Activated CD4-positive, alpha-beta memory T cell treated with anti-CD3 and anti-CD28 coated beads for 36 hours (primary cell): ENCODE measurements at regions of chr6 and their contacts with region 1.

Region 1: GRCh38 chr6:133923938-133924593 is 29.0 kb upstream of the TBPL1 start:
- DNase-seq: peak; percentile 60
- H3K4me3 Mint-ChIP-seq: no peak overlapping the region
- H3K27ac Mint-ChIP-seq: no peak overlapping the region
- H3K4me1 Mint-ChIP-seq: no peaks in the 10 kb centered on the region
- H3K27me3 Mint-ChIP-seq: peaks cover 27% of the 10 kb centered on the region

Region 2: DNA sequence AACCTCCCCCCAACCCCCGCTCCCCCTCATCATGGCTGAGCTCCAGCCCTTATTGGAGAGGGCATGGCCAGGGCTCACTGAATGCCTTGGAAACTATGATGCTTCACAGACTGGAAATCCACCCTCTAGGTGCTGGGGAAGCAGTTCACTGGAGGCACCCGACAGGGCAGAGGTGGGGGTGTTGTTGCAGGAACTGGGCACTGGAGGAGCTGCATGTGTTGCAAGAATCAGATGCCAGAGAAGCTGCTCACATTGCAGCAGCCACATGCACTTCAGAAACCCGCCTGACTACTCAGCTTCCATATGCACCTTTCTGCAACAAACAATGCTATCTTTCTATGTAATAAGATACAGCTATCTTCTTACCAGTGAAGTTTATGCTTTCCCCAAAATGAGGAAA is 21.1 kb after region 1 on chr6:
- CTCF ChIA-PET with region 1: interaction called, 18 read pairs
- POLR2A ChIA-PET with region 1: no interaction called
- intact Hi-C with region 1: no loop called
- DNase-seq: no peak
- H3K4me3 Mint-ChIP-seq: no peak overlapping the region
- H3K27ac Mint-ChIP-seq: no peak overlapping the region
- H3K4me1 Mint-ChIP-seq: no peaks in the 10 kb centered on the region
- H3K27me3 Mint-ChIP-seq: peaks cover 5% of the 10 kb centered on the region

Region 3: GRCh38 chr6:133973109-133973971 is 49.3 kb after region 1 on chr6:
- CTCF ChIA-PET with region 1: interaction called, 43 read pairs
- POLR2A ChIA-PET with region 1: no interaction called
- intact Hi-C with region 1: loop called (anchors 1 kb)
- DNase-seq: no peak
- H3K4me3 Mint-ChIP-seq: no peak overlapping the region
- H3K27ac Mint-ChIP-seq: no peak overlapping the region
- H3K4me1 Mint-ChIP-seq: peaks cover 30% of the 10 kb centered on the region
- H3K27me3 Mint-ChIP-seq: no peaks in the 10 kb centered on the region

Region 4: DNA sequence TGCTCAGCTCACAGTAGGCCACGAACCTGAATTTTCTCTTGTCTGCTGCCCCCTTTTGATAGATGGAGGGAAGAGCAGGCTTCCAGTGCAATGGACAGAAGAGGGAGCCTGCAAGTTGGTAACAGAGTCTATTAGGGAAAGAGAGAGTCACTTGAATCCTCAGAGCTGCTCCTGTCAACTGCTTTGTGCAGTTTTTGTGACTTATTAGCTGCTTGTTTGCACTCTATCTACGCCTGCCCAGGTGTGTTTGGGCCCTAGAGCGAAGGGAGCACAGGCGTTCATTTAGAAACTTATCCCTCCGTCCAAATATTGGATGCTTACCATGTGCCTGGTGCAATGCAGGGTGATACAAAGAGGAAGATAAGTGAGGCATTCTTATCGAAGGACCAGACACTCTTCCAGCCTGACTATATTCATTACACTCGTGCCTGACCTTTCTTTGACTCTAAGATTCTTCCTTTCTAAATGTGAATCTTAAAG is 139.9 kb after region 1 on chr6:
- CTCF ChIA-PET with region 1: interaction called, 207 read pairs
- POLR2A ChIA-PET with region 1: no interaction called
- intact Hi-C with region 1: loop called (anchors 1 kb)
- DNase-seq: peak; percentile 67
- H3K4me3 Mint-ChIP-seq: no peak overlapping the region
- H3K27ac Mint-ChIP-seq: no peak overlapping the region
- H3K4me1 Mint-ChIP-seq: no peaks in the 10 kb centered on the region
- H3K27me3 Mint-ChIP-seq: no peaks in the 10 kb centered on the region

Region 5: DNA sequence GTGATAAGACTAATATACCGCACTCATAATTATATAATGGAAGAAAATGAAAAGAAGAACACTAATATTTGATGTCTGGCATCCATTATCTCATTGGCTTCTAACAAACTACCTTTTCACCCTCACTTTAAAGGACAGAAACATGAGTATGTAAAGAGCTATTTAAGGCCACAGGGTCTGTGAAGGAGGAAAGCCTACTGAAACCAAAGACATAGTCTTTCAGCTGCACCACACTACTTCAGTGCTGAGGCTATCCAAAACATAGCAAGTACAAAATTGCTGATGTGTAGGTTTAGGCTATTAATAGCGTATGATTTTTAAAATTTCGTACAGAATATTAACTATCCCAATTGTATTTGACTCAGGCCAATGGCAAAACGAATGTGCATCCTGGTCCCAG is 166.5 kb after region 1 on chr6:
- CTCF ChIA-PET with region 1: interaction called, 362 read pairs
- POLR2A ChIA-PET with region 1: no interaction called
- intact Hi-C with region 1: no loop called
- DNase-seq: no peak
- H3K4me3 Mint-ChIP-seq: no peak overlapping the region
- H3K27ac Mint-ChIP-seq: no peak overlapping the region
- H3K4me1 Mint-ChIP-seq: no peaks in the 10 kb centered on the region
- H3K27me3 Mint-ChIP-seq: peaks cover 3% of the 10 kb centered on the region

Region 6: GRCh38 chr6:134211297-134211696 is 287.2 kb after region 1 on chr6:
- CTCF ChIA-PET with region 1: no interaction called
- POLR2A ChIA-PET with region 1: no interaction called
- intact Hi-C with region 1: no loop called
- DNase-seq: no peak
- H3K4me3 Mint-ChIP-seq: no peak overlapping the region
- H3K27ac Mint-ChIP-seq: no peak overlapping the region
- H3K4me1 Mint-ChIP-seq: no peaks in the 10 kb centered on the region
- H3K27me3 Mint-ChIP-seq: no peaks in the 10 kb centered on the region